ENCODE measurements at regions of chr4 and their contacts with region 1.

Region 1: DNA sequence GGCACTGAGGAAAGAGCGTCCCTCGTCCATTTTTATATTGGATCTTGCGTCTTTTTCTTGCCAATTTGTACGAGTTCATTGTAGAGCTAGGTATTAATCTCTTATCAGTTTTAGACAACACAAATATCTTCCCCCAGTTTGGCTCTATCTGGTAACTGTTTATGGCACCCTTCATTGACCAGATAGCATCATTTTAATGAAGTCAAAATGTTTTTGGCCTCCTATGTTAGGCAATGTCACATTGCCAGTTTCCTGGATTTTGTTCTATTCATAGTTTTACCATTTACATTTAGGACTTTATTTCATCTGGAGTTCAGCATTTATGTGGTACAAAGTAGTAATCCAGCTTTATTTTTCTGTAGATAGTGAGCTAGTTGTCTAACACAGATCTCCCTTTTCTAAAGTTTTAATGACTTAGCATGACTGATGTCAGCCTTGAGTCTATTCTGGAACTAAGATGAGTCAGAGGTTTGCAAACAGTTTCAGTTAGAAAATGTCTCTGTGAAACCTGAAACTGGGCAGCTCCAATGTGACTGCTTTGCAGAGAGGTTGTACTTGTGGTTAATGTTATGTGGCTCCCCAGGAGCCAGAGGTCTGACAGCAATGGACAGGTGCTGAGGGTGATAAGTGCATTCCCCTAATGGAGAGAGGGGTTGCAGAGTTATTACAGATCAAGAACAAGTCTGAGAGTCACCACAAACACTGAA is 5.3 kb upstream of the STBD1 start:
- DNase-seq: peak; percentile 32
- H3K4me3 Mint-ChIP-seq: peak overlapping the region; percentile 7
- H3K27ac Mint-ChIP-seq: no peak overlapping the region
- H3K4me1 Mint-ChIP-seq: peaks cover 62% of the 10 kb centered on the region
- H3K27me3 Mint-ChIP-seq: peaks cover 3% of the 10 kb centered on the region

Region 2: DNA sequence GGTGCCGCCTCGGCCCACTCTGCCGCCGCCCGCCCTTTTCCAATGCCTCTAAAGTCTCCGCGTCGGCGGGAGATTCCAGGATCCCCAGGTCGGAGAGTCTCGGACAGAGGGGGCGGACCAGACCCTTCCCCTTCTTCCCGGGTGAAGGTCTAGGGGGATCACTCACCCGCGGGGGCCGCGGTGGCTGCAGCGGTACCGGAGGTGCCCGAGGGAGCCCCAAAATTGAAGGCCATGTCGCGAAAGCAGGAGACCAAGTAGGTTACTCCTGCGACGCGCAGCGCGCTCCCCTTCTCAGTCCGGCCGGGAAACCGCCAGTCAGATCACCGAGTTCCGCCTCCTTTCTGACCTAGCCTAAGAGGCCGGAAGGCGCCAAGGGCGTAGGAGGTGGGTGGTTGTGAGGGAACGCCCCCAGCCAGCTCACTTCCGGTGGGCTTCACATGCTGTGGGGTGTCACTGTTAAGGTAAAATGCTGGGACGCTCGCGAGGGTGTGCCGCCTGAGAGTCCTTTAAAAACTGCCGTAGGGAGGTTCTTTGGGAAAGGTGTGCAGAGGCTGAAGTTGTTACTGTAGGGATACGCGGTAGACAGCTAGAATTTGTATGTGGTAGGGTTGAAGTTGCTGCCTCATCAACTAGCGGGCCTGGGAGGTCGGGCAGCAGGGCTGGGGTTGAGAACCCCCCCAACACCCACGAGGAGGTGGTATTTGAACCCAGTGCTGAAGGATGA is 152.9 kb before region 1 on chr4 and contains the start of gene NUP54:
- intact Hi-C with region 1: loop called (anchors 1 kb)
- DNase-seq: peak; percentile 94
- H3K4me3 Mint-ChIP-seq: peak within 1 kb of the TSS; percentile 99
- H3K27ac Mint-ChIP-seq: peak within 1 kb of the TSS; percentile 97
- H3K4me1 Mint-ChIP-seq: peaks cover 35% of the 10 kb centered on the region
- H3K27me3 Mint-ChIP-seq: no peaks in the 10 kb centered on the region
- total RNA-seq, gene NUP54: 70.6 and 75.1 TPM in 2 replicates

Region 3: GRCh38 chr4:76179398-76180318 is 121.6 kb before region 1 on chr4:
- intact Hi-C with region 1: loop called (anchors 1 kb)
- DNase-seq: peak; percentile 63
- H3K4me3 Mint-ChIP-seq: no peak overlapping the region
- H3K27ac Mint-ChIP-seq: no peak overlapping the region
- H3K4me1 Mint-ChIP-seq: no peaks in the 10 kb centered on the region
- H3K27me3 Mint-ChIP-seq: no peaks in the 10 kb centered on the region

Region 4: GRCh38 chr4:76198411-76199237 is 102.6 kb before region 1 on chr4:
- intact Hi-C with region 1: loop called (anchors 5 kb)
- DNase-seq: no peak
- H3K4me3 Mint-ChIP-seq: no peak overlapping the region
- H3K27ac Mint-ChIP-seq: no peak overlapping the region
- H3K4me1 Mint-ChIP-seq: peaks cover 33% of the 10 kb centered on the region
- H3K27me3 Mint-ChIP-seq: no peaks in the 10 kb centered on the region

Region 5: GRCh38 chr4:76251441-76252270 is 49.6 kb before region 1 on chr4 and contains the start of gene FAM47E:
- intact Hi-C with region 1: loop called (anchors 5 kb)
- DNase-seq: peak; percentile 8
- H3K4me3 Mint-ChIP-seq: peak within 1 kb of the TSS; percentile 77
- H3K27ac Mint-ChIP-seq: no peak within 1 kb of the TSS
- H3K4me1 Mint-ChIP-seq: peaks cover 8% of the 10 kb centered on the region
- H3K27me3 Mint-ChIP-seq: peaks cover 55% of the 10 kb centered on the region
- total RNA-seq, gene FAM47E: not detected in 2 replicates

Region 6: DNA sequence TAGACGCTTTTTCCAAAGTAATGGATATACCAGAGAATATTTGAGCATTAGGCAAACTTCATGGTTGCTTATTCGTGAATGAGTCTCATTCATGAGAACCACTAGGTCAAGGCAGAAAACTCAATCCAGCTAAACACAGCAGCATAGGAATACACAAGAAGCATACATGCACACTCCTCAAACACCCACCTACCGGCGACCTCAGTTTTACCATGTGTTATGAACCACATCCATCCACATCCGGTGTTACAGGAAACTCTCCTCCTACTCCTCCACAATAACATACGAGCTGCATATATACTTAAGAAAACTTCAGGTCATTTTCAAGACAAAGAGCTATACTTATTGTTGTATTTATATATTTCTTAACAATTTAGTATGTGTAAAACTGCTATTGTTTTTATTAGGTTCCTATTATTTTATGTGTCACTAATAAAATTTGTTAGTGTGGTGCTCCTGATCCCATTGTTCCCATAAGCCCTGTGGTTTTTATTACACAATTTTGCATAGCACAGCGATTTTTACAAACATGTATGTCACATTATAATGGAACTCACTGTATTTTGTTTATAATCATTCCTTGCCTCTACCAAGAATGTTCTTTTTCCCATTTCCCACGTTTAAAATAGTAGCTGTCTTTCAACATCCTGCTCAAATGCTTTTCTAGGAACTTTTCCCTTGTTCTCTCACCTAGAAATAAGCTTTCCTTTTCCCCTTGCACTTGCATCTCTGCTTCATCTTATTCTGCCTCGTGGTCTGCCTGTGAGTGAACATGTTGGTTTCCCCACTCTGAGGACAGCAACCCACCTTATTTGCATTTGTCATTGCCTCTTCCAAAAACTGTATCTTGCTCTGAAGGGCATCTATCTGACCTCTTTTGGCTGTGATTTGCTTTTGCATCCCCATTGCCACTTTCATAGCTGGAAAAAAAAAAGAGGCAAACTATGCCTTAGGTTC is 53.6 kb after region 1 on chr4:
- intact Hi-C with region 1: loop called (anchors 1 kb)
- DNase-seq: peak; percentile 14
- H3K4me3 Mint-ChIP-seq: peak overlapping the region; percentile 1
- H3K27ac Mint-ChIP-seq: no peak overlapping the region
- H3K4me1 Mint-ChIP-seq: peaks cover 21% of the 10 kb centered on the region
- H3K27me3 Mint-ChIP-seq: peaks cover 8% of the 10 kb centered on the region

Measured in activated T-helper 1 cell treated with anti-CD3 and anti-CD28 coated beads, Interleukin-12 subunit alpha, Interleukin-12 subunit beta, Interleukin-2, Interleukin-4 antibody, amounts not matched to agents 30 ng/mL and 10 ng/mL and 1 ng/mL, durations not matched to agents 14 hours and 24 hours and 36 hours (primary cell).